ENCODE measurements at regions of chr5 and their contacts with region 1.

Region 1: GRCh38 chr5:170333161-170333910 is 35.8 kb upstream of the LCP2 start:
- DNase-seq: peak in 13 of 14 experiments; percentile 39 to 89 (median 56)
- ATAC-seq: peak; percentile 39
- H3K4me3 ChIP-seq: peak overlapping the region; percentile 2
- H3K4me3 Mint-ChIP-seq: peak overlapping the region; percentile 78
- H3K27ac ChIP-seq: peak overlapping the region; percentile 95 to 97
- H3K27ac Mint-ChIP-seq: no peak overlapping the region
- H3K4me1 ChIP-seq: peaks cover 96% of the 10 kb centered on the region
- H3K4me1 Mint-ChIP-seq: peaks cover 30% of the 10 kb centered on the region
- H3K27me3 ChIP-seq: no peaks in the 10 kb centered on the region
- H3K27me3 Mint-ChIP-seq: no peaks in the 10 kb centered on the region
- CTCF ChIP-seq: no peak

Region 2: DNA sequence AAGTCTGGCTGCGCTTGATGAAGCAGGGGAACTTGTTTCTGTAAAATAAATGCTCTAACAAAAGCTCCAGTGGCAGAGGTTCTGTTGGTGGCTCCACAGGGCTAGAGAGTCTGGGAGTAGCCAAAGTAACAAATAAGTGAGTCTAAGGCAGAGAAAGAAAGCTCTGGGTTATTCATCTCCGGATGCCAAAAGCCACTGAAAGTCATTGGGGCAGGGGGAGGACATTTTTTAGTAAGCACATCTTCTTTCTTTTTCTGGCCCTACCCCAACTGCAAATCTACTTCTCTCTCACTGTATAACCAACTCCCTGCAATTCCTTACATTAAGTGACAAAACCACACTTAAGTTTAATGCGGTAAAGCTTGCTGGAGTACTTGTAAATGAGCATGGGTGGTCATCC is 494.6 kb before region 1 on chr5:
- CTCF ChIA-PET with region 1: no interaction called
- POLR2A ChIA-PET with region 1: no interaction called
- intact Hi-C with region 1: no loop called
- DNase-seq: no peak
- ATAC-seq: no peak
- H3K4me3 ChIP-seq: no peak overlapping the region
- H3K4me3 Mint-ChIP-seq: no peak overlapping the region
- H3K27ac ChIP-seq: no peak overlapping the region
- H3K27ac Mint-ChIP-seq: no peak overlapping the region
- H3K4me1 ChIP-seq: no peaks in the 10 kb centered on the region
- H3K4me1 Mint-ChIP-seq: peaks cover 4% of the 10 kb centered on the region
- H3K27me3 ChIP-seq: no peaks in the 10 kb centered on the region
- H3K27me3 Mint-ChIP-seq: no peaks in the 10 kb centered on the region
- CTCF ChIP-seq: no peak

Region 3: GRCh38 chr5:169848792-169849191 is 484.5 kb before region 1 on chr5:
- CTCF ChIA-PET with region 1: no interaction called
- POLR2A ChIA-PET with region 1: no interaction called
- intact Hi-C with region 1: no loop called
- DNase-seq: no peak
- ATAC-seq: no peak
- H3K4me3 ChIP-seq: no peak overlapping the region
- H3K4me3 Mint-ChIP-seq: no peak overlapping the region
- H3K27ac ChIP-seq: no peak overlapping the region
- H3K27ac Mint-ChIP-seq: no peak overlapping the region
- H3K4me1 ChIP-seq: no peaks in the 10 kb centered on the region
- H3K4me1 Mint-ChIP-seq: no peaks in the 10 kb centered on the region
- H3K27me3 ChIP-seq: no peaks in the 10 kb centered on the region
- H3K27me3 Mint-ChIP-seq: no peaks in the 10 kb centered on the region
- CTCF ChIP-seq: no peak

Region 4: DNA sequence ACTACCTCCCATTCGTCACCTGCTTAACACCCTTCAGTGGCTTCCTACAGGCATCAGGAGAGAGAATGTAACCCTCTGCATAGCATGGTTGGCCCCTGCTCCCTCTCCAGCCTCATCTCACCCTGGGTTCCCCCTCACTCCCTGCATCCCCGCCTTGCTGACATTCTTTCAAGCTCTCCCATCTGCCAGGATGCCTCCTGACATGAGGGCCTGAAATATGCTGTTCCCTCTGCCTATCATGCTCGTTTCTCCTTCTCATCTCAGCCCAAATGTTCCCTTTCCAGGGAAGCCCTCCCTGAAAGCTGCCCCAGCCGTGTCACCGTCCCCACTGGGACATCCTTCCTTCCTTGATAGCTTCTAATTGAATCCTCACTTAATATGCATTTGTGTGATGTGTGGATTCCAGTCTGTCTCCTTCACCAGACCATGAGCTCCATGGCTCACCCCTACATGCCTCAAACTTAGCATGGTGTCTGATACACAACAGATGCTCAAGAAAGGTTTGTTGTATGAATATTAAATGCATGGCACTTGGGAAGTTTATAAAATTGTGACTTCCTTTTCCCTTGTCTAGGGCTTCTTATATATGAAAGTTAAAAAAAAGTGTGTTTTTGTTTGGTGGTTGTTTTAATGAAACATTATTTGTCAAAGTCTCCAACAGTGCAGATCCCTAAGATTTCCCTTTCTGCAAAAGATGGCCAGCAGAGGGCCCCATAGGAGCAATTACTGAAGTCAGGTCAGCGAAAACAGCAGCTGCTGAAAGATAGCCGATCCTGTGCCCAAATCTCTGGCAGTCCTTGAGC is 107.8 kb before region 1 on chr5:
- CTCF ChIA-PET with region 1: interaction called, 54 read pairs
- POLR2A ChIA-PET with region 1: interaction called, 10 read pairs
- intact Hi-C with region 1: no loop called
- DNase-seq: peak; percentile 63 to 88 (median 75)
- ATAC-seq: peak; percentile 66
- H3K4me3 ChIP-seq: no peak overlapping the region
- H3K4me3 Mint-ChIP-seq: no peak overlapping the region
- H3K27ac ChIP-seq: no peak overlapping the region
- H3K27ac Mint-ChIP-seq: no peak overlapping the region
- H3K4me1 ChIP-seq: peaks cover 4% of the 10 kb centered on the region
- H3K4me1 Mint-ChIP-seq: peaks cover 4% of the 10 kb centered on the region
- H3K27me3 ChIP-seq: no peaks in the 10 kb centered on the region
- H3K27me3 Mint-ChIP-seq: no peaks in the 10 kb centered on the region
- CTCF ChIP-seq: peak; percentile 93

Region 5: DNA sequence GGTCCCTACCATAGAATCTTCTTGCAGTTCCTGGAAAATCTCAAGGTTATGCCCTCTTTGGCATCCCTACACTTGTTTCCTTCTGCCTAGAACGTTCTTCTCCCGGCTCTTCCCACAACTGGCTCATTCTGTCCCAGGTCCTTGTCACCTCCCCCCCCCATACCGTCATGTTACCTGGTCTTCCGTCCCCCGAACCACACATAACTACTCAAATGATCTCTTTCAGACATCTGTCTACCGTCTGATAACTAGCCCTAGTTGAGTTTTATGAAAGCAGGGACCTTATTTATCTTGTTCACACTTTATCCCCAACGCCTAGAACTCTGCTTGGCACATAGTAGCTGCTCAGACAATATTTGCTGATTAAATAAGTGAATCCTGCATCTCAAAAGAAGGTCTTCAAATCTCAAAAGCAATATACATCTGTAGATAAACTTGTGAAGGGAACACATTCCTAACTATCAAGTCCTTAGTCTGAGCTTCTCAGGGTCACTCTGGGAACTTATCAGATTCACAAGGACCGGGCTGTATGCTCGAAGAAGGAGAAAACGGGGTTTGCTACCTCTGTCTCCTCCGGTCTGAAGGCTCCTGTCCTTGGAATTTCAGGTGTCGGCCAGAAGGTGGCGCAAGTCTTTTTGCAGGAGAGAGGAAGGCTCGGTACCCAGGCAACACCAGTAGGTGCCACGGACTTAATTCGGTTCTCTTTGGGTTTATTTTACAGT is 65.7 kb before region 1 on chr5:
- CTCF ChIA-PET with region 1: interaction called, 73 read pairs
- POLR2A ChIA-PET with region 1: interaction called, 174 read pairs
- intact Hi-C with region 1: no loop called
- DNase-seq: peak; percentile 71 to 93 (median 78)
- ATAC-seq: peak; percentile 75
- H3K4me3 ChIP-seq: peak overlapping the region; percentile 8
- H3K4me3 Mint-ChIP-seq: peak overlapping the region; percentile 70
- H3K27ac ChIP-seq: peak overlapping the region; percentile 77 to 82
- H3K27ac Mint-ChIP-seq: peak overlapping the region; percentile 96
- H3K4me1 ChIP-seq: peaks cover 84% of the 10 kb centered on the region
- H3K4me1 Mint-ChIP-seq: peaks cover 93% of the 10 kb centered on the region
- H3K27me3 ChIP-seq: no peaks in the 10 kb centered on the region
- H3K27me3 Mint-ChIP-seq: no peaks in the 10 kb centered on the region
- CTCF ChIP-seq: peak; percentile 91

Region 6: GRCh38 chr5:170287532-170287931 is 45.8 kb before region 1 on chr5:
- CTCF ChIA-PET with region 1: interaction called, 65 read pairs
- POLR2A ChIA-PET with region 1: interaction called, 236 read pairs
- intact Hi-C with region 1: no loop called
- DNase-seq: peak in 3 of 14 experiments; percentile 50 to 55 (median 51)
- ATAC-seq: no peak
- H3K4me3 ChIP-seq: no peak overlapping the region
- H3K4me3 Mint-ChIP-seq: peak overlapping the region; percentile 47
- H3K27ac ChIP-seq: peak overlapping the region; percentile 62 to 63
- H3K27ac Mint-ChIP-seq: peak overlapping the region; percentile 96
- H3K4me1 ChIP-seq: peaks cover 94% of the 10 kb centered on the region
- H3K4me1 Mint-ChIP-seq: peaks cover 100% of the 10 kb centered on the region
- H3K27me3 ChIP-seq: no peaks in the 10 kb centered on the region
- H3K27me3 Mint-ChIP-seq: no peaks in the 10 kb centered on the region
- CTCF ChIP-seq: no peak

Region 7: DNA sequence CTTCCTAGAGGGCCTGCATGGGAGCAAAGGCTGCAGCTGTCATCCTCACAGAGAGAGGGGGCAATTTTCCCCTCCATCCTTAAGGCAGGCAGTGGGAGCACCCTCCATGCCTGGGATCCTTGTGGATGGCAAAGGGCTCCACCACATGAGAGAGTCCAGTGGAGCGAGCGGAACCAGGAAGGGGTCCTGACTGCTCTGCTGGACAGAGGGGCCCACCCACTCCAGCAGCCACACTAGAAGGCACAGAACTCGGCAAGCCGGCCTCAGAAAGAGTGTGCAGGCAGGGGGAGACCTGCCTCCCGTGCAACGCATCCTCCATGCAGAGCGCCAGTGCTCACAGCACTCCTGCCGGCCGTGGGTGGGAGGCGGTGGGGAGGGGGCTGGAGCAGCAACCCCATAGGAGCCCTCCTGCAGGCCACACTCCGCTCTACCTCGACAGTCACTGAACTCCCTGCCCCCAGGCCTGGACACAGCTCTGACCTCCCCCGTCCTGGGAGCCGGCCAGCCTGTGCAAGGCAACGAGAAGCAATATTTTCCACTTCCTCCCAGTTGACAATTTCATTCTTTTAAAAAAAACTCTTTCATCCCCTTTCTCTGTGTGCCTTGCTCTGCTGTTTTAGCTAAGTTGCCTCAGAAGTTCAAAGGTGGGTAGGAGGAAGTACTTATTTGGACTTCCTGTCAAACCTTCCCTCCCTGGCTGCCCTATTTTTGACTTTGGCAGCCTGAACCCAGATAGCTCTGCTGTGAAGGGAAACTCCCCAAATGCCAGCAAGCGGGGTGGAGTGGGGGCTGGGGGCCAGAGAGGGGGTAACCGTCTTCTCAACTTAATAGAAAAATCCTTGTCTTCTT is 30.5 kb before region 1 on chr5:
- CTCF ChIA-PET with region 1: interaction called, 65 read pairs
- POLR2A ChIA-PET with region 1: interaction called, 236 read pairs
- intact Hi-C with region 1: loop called in 1 of 2 experiments (anchors 1 kb)
- DNase-seq: peak; percentile 36 to 96 (median 58)
- ATAC-seq: peak; percentile 95
- H3K4me3 ChIP-seq: peak overlapping the region; percentile 47
- H3K4me3 Mint-ChIP-seq: peak overlapping the region; percentile 87
- H3K27ac ChIP-seq: peak overlapping the region; percentile 88 to 92
- H3K27ac Mint-ChIP-seq: peak overlapping the region; percentile 96
- H3K4me1 ChIP-seq: peaks cover 82% of the 10 kb centered on the region
- H3K4me1 Mint-ChIP-seq: peaks cover 87% of the 10 kb centered on the region
- H3K27me3 ChIP-seq: no peaks in the 10 kb centered on the region
- H3K27me3 Mint-ChIP-seq: no peaks in the 10 kb centered on the region
- CTCF ChIP-seq: peak; percentile 27

Region 8: DNA sequence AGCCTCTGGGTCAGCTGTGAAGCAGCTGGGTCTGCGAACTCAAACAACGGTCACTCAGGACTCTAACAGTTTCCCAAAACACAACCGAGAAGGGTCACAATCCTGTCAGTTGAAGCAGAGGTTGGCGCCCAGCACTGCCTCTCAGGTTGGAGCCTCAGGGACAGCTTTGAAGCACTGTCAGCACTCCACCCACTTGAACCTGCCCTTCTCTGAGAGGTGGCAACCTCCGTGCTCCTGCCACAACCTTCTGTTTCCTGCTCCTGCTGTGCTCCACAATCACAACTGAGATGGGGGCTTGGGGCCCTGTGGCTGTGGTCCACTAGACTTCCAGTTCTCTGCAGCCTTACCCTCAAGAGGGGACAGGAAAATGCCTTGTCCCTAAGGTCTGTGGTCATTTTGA is 14.0 kb before region 1 on chr5:
- CTCF ChIA-PET with region 1: interaction called, 3 read pairs
- POLR2A ChIA-PET with region 1: interaction called, 50 read pairs
- intact Hi-C with region 1: loop called in 1 of 2 experiments (anchors 2 kb)
- DNase-seq: peak in 2 of 14 experiments; percentile 33 to 56
- ATAC-seq: peak; percentile 69
- H3K4me3 ChIP-seq: no peak overlapping the region
- H3K4me3 Mint-ChIP-seq: no peak overlapping the region
- H3K27ac ChIP-seq: no peak overlapping the region
- H3K27ac Mint-ChIP-seq: no peak overlapping the region
- H3K4me1 ChIP-seq: peaks cover 12% of the 10 kb centered on the region
- H3K4me1 Mint-ChIP-seq: peaks cover 60% of the 10 kb centered on the region
- H3K27me3 ChIP-seq: no peaks in the 10 kb centered on the region
- H3K27me3 Mint-ChIP-seq: no peaks in the 10 kb centered on the region
- CTCF ChIP-seq: no peak